Astrocyte of the cerebellum (primary cell): ENCODE measurements at regions of chr5 and their contacts with region 1.

Region 1: GRCh38 chr5:54874373-54874921 is 110.9 kb downstream of the ESM1 start:
- DNase-seq: no peak
- H3K4me3 ChIP-seq: no peak overlapping the region
- CTCF ChIP-seq: no peak

Region 2: DNA sequence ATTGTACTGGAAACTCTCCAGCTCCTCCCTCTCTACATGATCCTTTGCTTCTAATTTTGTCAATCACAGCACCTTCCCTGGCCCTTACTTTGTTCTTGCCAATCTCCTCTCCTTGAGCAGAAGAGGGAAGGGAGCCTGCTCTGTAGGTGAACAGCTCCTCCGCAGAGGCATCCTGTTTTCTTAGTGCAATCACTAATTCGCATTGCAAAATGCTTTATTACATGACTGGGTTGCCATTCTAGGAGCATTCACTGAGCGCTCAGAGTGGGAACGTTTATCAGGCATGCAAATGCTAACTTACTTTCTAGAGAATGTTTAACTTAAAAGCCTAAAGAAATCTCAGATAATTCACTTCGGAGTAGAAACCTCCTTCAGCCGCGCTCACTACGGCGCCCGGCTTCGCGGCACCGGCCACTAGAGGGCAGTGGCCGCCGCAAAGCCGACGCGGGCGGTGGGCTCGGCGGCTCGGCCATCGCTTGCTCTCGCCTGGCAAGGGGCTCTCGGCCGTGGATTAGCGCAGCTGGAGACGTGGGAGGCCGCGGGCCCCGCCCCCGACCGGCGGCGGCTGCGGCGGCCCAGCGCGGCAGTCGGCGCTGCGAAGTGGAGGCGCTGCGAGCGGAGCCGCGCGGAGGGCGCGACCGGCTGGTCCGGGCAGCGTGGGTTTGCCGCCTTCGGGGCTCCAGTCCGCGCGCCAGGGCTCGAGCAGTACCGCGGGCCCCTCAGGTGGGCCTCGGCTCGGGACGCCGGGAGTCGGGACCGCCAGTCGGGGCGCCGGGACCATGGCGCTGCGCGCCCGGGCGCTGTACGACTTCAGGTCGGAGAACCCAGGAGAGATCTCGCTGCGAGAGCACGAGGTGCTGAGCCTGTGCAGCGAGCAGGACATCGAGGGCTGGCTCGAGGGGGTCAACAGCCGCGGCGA is 357.0 kb before region 1 on chr5 and contains the start of gene SNX18:
- in situ Hi-C with region 1: loop called (anchors 5 kb)
- DNase-seq: peak; percentile 85
- H3K4me3 ChIP-seq: peak within 1 kb of the TSS; percentile 53
- CTCF ChIP-seq: peak; percentile 86

Region 3: GRCh38 chr5:54738118-54738972 is 136.1 kb before region 1 on chr5:
- in situ Hi-C with region 1: no loop called
- DNase-seq: no peak
- H3K4me3 ChIP-seq: no peak overlapping the region
- CTCF ChIP-seq: no peak

Region 4: GRCh38 chr5:54969856-54970828 is 95.7 kb after region 1 on chr5:
- in situ Hi-C with region 1: no loop called
- DNase-seq: peak; percentile 71
- H3K4me3 ChIP-seq: no peak overlapping the region
- CTCF ChIP-seq: no peak